ENCODE measurements at regions of chr1 and their contacts with region 1.

Region 1: DNA sequence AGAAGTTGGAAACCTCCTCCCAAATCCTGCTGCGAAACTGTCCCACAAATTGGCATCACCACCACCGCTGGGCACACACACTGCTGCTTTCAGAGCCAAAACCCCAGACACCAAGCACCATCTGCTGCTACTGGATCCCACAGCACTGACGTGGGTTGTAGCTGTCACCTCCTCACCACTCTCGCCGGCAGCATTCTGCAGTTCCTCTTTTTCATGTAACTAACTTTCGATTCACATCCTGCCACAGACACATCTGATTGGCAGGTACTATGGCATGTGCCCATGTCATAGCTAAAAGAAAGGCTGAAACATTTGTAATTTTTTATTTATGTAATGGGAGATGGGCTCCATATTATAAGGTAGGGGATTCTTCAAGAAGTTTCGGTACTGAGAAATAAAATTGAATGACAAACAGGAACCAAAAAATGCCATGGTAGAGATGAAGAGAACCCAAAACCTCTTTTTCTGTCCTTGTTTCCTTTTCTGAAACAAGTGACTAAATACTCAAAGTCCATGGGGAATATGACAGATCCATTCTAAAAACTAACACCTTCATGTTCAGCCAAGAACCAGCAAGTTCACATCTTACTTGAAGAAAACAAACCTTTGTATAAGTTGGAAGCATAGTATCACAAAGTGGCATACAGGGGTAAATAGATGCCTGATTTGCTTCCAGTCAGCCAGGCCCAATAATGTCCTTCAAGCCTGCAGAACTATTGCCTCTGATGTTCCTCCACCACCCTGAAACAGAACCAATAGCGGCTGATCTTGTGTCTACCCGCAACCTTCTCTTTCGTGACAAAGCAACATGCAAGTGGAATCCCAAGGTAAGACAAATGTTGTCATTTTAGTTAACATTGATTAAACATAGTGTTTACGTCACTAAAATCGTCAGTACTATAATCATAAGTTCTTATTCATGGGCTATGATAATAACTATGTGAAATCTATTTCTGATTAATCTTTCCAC is 26.6 kb upstream of the RGS13 start:
- DNase-seq: peak; percentile 81

Region 2: GRCh38 chr1:192382758-192383157 is 226.6 kb before region 1 on chr1:
- intact Hi-C with region 1: no loop called
- DNase-seq: no peak

Region 3: DNA sequence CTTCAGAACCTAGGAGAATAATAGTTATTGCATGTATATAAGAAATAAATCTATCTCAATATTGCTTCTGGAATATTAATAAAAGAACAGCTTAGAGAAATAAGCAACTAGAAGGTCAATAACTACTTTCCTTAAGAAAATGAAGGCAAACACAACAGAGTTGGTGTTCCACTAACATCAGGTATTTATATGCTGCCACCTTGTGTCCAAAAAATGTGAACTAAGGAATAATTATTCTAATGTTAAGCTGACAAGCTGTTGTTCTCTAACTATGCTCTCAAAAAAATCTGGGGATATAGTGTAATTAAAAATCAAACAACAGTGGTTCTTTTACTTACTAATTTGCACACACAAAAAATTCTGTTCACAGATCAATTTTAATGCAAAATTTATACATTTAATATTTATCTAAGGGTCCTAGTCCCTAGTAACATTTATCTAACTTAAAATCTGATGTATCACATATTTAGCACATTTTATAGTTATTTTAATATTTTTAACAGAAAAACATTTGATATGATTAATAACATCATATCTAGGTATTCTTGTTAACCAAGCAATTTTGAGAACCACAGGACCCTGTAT is 410.1 kb after region 1 on chr1:
- intact Hi-C with region 1: loop called (anchors 10 kb)
- DNase-seq: no peak

Region 4: GRCh38 chr1:193031438-193031837 is 422.0 kb after region 1 on chr1:
- intact Hi-C with region 1: loop called (anchors 5 kb)
- DNase-seq: no peak